Posterior vena cava (tissue), 2 donors: ENCODE measurements at regions of chr1 and their contacts with region 1.

Region 1: GRCh38 chr1:245730801-245731200 is 576.0 kb downstream of the KIF26B start:
- DNase-seq: no peak

Region 2: GRCh38 chr1:245763873-245764331 is 33.1 kb after region 1 on chr1:
- intact Hi-C with region 1: loop called in 1 of 2 experiments (anchors 1 kb)
- DNase-seq: no peak